ENCODE measurements at regions of chr13 and their contacts with region 1.

Region 1: DNA sequence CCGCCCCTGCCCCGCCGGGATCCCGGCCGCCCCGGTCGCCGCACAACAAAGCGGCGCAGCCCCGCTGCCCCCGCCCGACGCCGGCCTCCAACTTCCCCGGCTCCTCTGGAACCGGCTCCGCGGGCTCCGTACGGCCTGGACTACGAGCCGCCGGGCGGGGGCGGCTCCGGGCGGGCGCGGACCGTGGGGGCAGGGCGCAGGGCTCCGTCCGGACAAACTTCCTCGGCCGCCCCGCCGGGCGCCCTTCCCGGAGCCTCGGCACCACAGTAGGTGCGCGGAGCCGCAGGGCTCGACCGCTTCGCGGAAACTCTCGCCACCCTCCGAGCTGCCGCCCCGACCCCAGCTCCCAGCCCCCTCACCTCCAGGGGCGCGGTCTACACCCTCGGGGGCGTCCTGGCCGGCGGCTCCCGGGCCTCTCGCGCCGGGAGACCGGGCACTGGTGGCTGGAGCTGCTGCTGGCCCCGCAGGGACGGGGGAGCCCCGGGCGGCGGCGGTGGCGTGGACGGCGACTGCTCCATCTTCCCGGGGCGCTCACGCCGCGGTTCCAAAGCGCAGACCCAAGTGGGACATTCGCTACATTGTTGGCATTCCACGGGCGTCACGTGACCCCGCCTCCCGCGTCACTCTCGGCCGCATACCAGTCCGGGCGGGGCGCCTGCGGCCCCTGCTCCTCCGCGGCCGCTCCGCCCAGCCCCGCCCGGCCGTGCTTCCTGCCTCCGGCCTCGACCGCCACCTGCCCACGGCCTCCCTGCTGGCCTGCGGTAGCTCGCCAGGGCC is at the start of gene LATS2:
- DNase-seq: peak; percentile 94 to 96 (median 94)
- ATAC-seq: peak; percentile 98
- H3K4me3 ChIP-seq: peak within 1 kb of the TSS; percentile 84
- H3K4me1 ChIP-seq: no peaks in the 10 kb centered on the region
- CTCF ChIP-seq: no peak
- total RNA-seq, gene LATS2: 9.1 to 25.9 (median 10.3) TPM

Region 2: GRCh38 chr13:21014502-21015170 is 46.5 kb before region 1 on chr13:
- intact Hi-C with region 1: loop called in 1 of 2 experiments (anchors 5 kb)
- DNase-seq: no peak
- ATAC-seq: peak; percentile 42
- H3K4me3 ChIP-seq: no peak overlapping the region
- H3K4me1 ChIP-seq: no peaks in the 10 kb centered on the region
- CTCF ChIP-seq: no peak